AG04449 (cell line): ENCODE measurements at regions of chr1 and their contacts with region 1.

Region 1: GRCh38 chr1:110209715-110210603 is at the start of gene KCNC4:
- DNase-seq: no peak
- H3K4me3 ChIP-seq: peak within 1 kb of the TSS; percentile 57
- CTCF ChIP-seq: no peak

Region 2: GRCh38 chr1:110097887-110098681 is 111.9 kb before region 1 on chr1:
- CTCF ChIA-PET with region 1: no interaction called
- POLR2A ChIA-PET with region 1: no interaction called
- DNase-seq: no peak
- H3K4me3 ChIP-seq: no peak overlapping the region
- CTCF ChIP-seq: no peak

Region 3: DNA sequence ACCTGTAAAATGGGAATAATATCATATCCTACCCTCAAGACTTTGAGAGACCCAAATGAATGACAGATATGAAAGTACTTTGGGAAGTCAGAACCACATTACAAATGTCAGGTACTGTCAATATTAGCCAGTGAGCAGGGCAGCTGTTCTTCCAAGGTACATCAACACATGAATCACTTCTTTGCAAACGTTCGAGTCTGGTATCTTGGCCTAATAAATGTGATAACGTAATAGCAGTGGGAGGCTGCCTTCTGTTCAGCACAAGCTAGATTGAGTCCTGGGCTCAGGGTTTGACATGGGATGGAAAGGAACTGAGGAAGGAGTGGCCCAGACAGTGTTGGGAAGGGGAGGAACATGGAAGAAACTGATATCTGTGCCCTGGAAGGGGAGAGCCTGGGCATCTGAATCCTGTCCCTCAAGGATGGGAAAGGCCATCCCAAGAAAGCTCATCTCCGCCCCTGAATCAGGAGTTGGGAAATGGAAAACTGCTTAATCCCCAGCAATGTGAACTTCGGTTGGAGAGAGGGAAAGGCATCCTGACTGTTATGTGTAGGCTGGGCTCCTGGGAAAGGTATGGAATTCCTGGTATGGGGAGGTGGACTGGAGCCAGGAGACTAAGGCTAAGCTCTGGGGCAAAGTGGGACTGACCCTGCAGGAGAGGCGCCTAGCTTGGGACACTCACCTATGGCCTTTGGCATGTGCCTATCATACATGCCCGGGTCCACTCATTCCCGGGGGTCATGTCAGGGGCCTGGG is 14.5 kb after region 1 on chr1:
- CTCF ChIA-PET with region 1: interaction called, 50 read pairs
- POLR2A ChIA-PET with region 1: no interaction called
- DNase-seq: no peak
- H3K4me3 ChIP-seq: no peak overlapping the region
- CTCF ChIP-seq: no peak

Region 4: GRCh38 chr1:110292031-110292741 is 82.2 kb after region 1 on chr1:
- CTCF ChIA-PET with region 1: interaction called, 828 read pairs
- POLR2A ChIA-PET with region 1: no interaction called
- DNase-seq: no peak
- H3K4me3 ChIP-seq: no peak overlapping the region
- CTCF ChIP-seq: no peak

Region 5: GRCh38 chr1:110338886-110339406 is 129.0 kb after region 1 on chr1 and contains the start of gene RBM15:
- CTCF ChIA-PET with region 1: interaction called, 150 read pairs
- POLR2A ChIA-PET with region 1: interaction called, 5 read pairs
- DNase-seq: peak; percentile 100
- H3K4me3 ChIP-seq: peak within 1 kb of the TSS; percentile 98
- CTCF ChIP-seq: no peak

Region 6: DNA sequence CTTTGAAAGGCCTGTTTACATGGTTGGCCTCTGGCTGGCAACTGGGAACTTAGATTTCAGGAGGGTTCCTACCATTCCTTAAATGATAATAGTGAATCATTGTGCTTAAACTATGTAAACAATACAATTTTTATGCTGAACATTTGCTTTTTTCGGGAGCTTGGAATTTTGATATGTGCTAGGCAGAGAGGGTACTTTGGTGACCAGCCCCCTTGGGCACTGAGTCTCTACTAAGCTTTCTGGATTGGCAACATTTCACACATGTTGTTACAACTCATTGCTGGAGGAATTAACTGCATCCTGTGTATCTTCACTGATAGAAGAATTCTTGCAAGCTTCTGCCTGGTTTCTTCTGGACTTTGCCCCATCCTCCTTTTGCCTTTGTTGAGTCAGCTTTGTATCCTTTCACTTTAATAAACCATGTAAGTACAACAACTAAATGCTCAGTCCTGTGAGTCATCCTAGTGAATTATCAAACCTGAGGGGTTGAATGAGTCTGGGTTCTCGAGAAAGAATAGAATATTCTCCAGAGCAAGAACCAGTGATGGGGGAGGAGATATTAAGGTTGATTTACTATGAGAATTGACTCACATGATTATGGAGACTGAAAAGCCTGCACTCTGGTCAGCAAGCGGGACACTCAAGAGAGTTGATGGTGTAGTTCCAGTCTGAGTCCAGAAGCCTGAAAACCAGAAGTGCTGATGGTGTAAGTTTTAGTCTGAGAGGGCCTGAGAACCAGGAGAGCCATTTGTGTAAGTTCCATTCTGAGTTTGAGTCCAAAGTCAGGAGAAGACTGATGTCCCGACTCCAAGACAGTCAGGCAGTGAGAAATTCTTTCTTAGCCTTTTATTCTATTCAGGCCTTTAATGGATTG is 184.0 kb after region 1 on chr1:
- CTCF ChIA-PET with region 1: interaction called, 13 read pairs
- POLR2A ChIA-PET with region 1: no interaction called
- DNase-seq: peak; percentile 67
- H3K4me3 ChIP-seq: no peak overlapping the region
- CTCF ChIP-seq: no peak

Region 7: DNA sequence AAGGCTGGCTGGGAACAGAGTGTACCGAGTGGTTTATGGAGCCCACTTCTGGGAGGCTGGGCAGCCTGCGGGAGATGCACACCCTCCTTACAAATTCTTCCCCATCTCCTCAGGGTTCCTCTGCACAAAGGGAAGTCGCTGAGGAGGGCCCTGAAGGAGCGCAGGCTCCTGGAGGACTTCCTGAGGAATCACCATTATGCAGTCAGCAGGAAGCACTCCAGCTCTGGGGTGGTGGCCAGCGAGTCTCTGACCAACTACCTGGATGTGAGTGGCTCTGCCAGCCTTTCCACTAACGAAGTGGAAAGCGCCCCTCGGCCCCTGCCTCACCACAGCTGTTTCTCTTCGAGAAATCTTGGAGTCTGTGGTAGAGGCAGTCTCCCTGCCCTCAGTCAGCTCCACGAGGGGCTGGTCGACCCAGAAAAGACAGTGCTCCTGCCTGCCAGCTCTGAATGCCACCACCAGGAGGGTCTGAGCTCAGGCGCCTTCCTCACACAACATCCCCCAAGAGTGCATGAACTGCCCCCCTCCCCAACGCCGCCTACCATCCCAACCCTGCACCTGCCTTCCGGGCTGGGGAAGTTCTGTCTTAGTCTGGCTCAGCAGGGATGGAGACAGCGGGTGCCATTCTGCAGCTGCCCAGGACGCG is 272.8 kb after region 1 on chr1:
- CTCF ChIA-PET with region 1: interaction called, 15 read pairs
- POLR2A ChIA-PET with region 1: no interaction called
- DNase-seq: no peak
- H3K4me3 ChIP-seq: no peak overlapping the region
- CTCF ChIP-seq: no peak